ENCODE measurements at regions of chr3 and their contacts with region 1.

Region 1: DNA sequence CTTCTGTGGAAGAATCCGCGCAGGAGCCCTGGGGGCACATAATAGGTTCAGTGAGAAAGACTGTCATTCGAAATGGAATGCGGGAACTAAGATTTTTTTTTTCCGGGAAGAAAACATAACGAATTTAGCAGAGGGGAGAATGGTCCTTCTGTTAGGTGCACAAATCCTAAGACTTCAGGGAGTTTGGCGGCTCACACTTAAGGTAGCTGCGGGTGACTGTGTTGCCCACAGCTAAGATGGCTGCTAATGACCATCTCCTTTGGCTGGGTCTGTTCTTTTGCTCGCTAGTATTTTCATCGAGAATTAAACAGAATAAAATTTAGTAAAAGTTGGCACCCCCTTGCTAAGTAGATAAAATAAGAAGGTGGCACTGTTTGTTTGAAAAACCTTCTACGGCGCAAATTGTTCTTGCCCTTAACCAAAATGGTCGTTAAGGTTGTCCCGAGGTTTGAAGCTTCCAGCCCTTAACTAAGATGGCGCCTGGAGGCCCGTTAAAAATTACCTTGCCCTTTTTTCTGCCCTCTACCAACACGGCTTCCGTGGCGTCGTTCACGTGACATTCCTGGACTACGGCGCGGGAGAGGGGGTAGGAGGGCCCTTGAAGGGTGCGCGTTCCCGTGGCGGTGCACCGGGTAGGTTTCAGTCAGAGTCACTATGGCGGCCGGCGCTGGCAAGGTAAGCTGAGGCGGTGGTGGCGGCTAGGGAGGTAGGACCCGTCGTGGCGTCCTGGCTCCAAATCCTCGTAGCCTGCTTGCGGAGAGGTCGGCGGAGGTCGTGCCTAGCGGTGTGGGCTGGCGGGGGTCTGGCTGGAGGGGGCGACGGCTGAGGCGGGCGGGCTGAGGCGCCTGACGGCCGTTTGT is at the start of gene SLMAP:
- DNase-seq: peak; percentile 99
- H3K4me3 Mint-ChIP-seq: peak within 1 kb of the TSS; percentile 98
- H3K27ac Mint-ChIP-seq: peak within 1 kb of the TSS; percentile 92
- H3K4me1 Mint-ChIP-seq: peaks cover 36% of the 10 kb centered on the region
- H3K27me3 Mint-ChIP-seq: no peaks in the 10 kb centered on the region
- total RNA-seq, gene SLMAP: 35.1 TPM

Region 2: DNA sequence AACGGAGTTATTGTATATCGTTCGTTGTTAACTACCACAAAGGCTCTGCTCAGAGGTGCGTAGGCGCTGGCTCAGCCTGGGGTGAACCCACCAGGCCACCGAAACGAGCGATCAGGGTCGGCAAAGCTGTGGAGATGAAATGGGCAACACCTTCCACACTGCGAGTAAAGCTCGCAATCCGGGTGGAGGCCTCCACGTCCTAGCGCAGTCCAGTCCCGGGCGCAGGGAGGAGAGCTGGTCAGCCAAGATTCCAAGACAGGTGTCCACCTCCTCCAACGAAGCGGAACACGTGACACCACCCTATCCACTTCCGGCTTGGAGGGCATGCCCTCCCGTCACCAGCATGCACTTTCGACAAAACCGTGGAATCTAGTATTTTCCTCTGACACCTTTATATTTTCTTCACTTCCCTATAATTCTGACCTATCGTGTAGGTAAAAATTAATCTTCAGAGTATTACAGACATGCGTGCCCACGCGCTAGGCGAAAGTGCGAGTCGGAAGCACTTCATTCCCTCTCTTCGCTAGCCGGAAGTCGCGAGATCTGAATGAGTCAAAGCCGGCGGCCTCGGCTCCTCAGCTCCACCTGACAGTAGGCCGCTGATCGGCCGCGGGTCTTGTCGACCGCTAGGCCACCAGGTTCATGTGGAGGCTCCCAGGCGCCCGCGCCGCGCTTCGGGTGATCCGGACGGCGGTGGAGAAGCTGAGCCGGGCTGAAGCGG is 200.0 kb before region 1 on chr3 and contains the start of gene PDE12:
- CTCF ChIA-PET with region 1: no interaction called
- intact Hi-C with region 1: loop called (anchors 1 kb)
- DNase-seq: peak; percentile 89
- H3K4me3 Mint-ChIP-seq: peak within 1 kb of the TSS; percentile 98
- H3K27ac Mint-ChIP-seq: peak within 1 kb of the TSS; percentile 98
- H3K4me1 Mint-ChIP-seq: peaks cover 33% of the 10 kb centered on the region
- H3K27me3 Mint-ChIP-seq: no peaks in the 10 kb centered on the region
- total RNA-seq, gene PDE12: 15.3 to 15.6 TPM

Region 3: DNA sequence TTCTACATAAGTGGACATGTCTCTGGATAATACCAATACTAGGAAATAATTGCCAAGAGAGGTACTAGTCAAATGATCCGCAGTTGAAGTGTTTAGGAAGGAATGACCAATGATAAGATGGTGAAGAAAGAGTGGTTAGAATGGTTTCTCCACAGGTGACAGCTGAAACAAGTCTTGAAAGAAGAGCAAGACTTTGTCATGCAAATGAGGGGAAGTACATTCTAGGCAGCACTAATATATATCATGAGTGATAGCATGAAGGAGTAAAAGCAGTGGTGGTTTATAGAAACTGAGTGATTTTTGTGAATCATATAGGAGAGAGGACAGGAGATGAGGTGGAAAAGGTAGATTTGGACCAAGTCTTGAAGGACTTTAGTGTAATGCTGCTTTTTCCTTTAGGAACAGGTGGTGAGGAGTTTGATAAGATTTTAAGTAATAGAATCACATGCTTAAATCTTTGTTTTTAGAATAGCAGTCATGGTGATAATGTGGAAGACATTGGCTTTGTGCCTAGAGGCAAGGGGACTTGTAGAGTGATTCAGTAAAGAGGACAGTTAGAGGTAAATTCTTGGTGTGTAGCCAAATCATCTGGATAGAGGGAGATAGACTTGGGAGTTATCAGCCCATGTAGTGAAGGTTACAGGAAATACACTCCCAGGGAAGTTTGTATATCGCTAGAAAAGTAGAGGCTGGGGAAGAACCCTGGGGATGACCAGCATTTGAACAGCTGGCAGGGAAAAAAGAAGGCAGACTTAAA is 32.1 kb after region 1 on chr3:
- CTCF ChIA-PET with region 1: no interaction called
- intact Hi-C with region 1: loop called (anchors 1 kb)
- DNase-seq: no peak
- H3K4me3 Mint-ChIP-seq: no peak overlapping the region
- H3K27ac Mint-ChIP-seq: no peak overlapping the region
- H3K4me1 Mint-ChIP-seq: peaks cover 31% of the 10 kb centered on the region
- H3K27me3 Mint-ChIP-seq: no peaks in the 10 kb centered on the region

Region 4: GRCh38 chr3:57803647-57804081 is 47.8 kb after region 1 on chr3:
- CTCF ChIA-PET with region 1: no interaction called
- intact Hi-C with region 1: loop called (anchors 1 kb)
- DNase-seq: no peak
- H3K4me3 Mint-ChIP-seq: peak overlapping the region; percentile 3
- H3K27ac Mint-ChIP-seq: peak overlapping the region; percentile 33
- H3K4me1 Mint-ChIP-seq: peaks cover 70% of the 10 kb centered on the region
- H3K27me3 Mint-ChIP-seq: no peaks in the 10 kb centered on the region

Region 5: DNA sequence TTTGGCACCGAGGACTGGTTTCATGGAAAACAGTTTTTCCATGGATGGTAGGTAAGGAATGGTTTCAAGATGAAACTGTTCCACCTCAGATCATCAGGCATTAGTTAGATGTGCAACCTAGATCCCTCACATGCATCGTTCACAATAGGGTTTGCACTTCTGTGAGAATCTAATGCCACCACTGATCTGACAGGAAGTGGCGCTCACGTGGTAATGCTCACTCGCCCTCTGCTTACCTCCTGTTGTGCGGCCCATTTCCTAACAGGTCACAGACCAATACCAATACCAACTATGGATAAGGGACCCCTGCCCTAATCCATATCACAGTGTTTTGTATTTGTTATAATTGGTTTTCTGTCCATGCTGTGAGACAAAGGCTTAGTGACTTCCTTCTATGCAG is 59.1 kb after region 1 on chr3:
- CTCF ChIA-PET with region 1: no interaction called
- intact Hi-C with region 1: loop called (anchors 5 kb)
- DNase-seq: peak; percentile 64
- H3K4me3 Mint-ChIP-seq: no peak overlapping the region
- H3K27ac Mint-ChIP-seq: no peak overlapping the region
- H3K4me1 Mint-ChIP-seq: peaks cover 44% of the 10 kb centered on the region
- H3K27me3 Mint-ChIP-seq: no peaks in the 10 kb centered on the region

Region 6: DNA sequence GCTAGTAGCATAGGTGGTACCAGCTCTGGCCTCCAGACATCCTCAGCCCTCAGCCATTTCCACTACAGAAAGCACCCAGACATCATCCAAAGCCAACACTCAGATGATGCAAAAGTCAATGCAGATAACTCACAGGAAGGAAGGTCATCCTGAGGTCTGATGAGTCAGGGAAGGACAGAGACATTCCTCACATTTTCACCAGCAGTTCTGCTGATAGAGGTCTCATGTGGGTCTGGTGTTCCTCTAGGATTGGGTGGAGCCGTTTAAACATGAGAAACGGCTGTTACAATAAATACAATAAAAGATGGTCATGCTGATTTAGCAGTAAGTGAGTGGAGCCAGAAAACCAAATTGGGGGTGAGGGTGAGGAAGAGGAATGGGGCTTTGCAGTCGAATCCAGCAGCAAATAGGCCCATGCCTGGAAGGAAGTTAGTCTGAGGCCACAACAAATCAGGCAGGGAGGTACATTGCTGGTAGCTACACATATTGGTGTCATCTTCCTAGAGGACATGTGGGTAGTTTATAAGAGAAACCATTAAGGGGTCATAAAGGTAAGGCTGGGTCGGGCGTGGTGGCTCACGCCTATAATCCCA is 219.0 kb after region 1 on chr3:
- CTCF ChIA-PET with region 1: no interaction called
- intact Hi-C with region 1: no loop called
- DNase-seq: no peak
- H3K4me3 Mint-ChIP-seq: no peak overlapping the region
- H3K27ac Mint-ChIP-seq: peak overlapping the region; percentile 25
- H3K4me1 Mint-ChIP-seq: peaks cover 7% of the 10 kb centered on the region
- H3K27me3 Mint-ChIP-seq: no peaks in the 10 kb centered on the region